Activated CD8-positive, alpha-beta T cell treated with anti-CD3 and anti-CD28 coated beads for 36 hours (primary cell): ENCODE measurements at regions of chr6 and their contacts with region 1.

Region 1: GRCh38 chr6:26270903-26271667 is 93.9 kb upstream of the BTN3A2 start:
- DNase-seq: peak; percentile 87
- ATAC-seq: peak; percentile 43
- H3K4me3 Mint-ChIP-seq: no peak overlapping the region
- H3K27ac Mint-ChIP-seq: no peak overlapping the region
- H3K4me1 Mint-ChIP-seq: peaks cover 18% of the 10 kb centered on the region
- H3K27me3 Mint-ChIP-seq: no peaks in the 10 kb centered on the region
- CTCF ChIP-seq: no peak

Region 2: DNA sequence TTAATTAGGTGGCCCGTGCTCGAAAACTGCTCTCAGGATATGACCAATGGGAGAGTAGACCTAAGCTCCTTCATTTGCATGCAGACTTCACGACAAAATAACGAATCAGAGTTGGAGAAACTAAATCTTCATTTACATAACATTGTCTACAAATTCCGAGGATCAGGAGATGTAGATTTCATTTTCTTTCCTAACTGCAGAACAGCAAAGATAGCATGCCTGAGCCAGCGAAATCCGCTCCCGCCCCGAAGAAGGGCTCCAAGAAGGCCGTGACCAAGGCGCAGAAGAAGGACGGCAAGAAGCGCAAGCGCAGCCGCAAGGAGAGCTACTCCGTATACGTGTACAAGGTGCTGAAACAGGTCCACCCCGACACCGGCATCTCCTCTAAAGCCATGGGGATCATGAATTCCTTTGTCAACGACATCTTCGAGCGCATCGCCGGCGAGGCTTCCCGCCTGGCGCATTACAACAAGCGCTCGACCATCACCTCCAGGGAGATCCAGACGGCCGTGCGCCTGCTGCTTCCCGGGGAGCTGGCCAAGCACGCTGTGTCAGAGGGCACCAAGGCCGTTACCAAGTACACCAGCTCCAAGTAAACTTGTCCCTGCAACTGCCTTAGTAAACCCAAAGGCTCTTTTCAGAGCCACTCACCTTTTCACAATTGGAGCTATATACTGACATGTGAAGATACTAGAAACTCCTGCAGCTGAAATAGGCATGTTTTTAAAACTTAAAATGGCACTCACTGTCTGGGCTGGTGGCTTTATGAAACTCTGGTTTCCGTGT is 87.3 kb before region 1 on chr6:
- CTCF ChIA-PET with region 1: interaction called, 3 read pairs
- POLR2A ChIA-PET with region 1: interaction called, 43 read pairs
- intact Hi-C with region 1: no loop called
- DNase-seq: peak; percentile 72
- ATAC-seq: peak; percentile 82
- H3K4me3 Mint-ChIP-seq: peak overlapping the region; percentile 76
- H3K27ac Mint-ChIP-seq: peak overlapping the region; percentile 84
- H3K4me1 Mint-ChIP-seq: peaks cover 38% of the 10 kb centered on the region
- H3K27me3 Mint-ChIP-seq: no peaks in the 10 kb centered on the region
- CTCF ChIP-seq: no peak

Region 3: DNA sequence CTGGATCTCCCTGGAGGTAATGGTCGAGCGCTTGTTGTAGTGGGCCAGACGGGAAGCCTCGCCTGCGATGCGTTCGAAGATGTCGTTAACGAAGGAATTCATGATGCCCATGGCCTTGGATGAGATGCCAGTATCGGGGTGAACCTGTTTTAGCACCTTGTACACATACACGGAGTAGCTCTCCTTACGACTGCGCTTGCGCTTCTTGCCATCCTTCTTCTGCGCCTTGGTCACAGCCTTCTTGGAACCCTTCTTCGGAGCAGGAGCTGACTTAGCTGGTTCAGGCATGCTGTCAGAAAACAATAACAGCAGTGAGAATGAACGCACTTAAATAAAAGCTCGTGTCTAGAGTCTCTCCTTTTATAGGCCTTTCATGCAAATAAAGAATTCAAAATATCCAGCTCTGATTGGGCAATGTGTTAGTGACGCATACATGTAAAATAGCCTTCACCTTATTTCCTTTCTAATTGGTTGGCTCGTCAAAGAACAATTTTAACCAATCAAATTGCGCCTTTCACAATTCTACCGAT is 54.7 kb before region 1 on chr6:
- CTCF ChIA-PET with region 1: no interaction called
- POLR2A ChIA-PET with region 1: interaction called, 89 read pairs
- intact Hi-C with region 1: loop called (anchors 5 kb)
- DNase-seq: peak; percentile 87
- ATAC-seq: peak; percentile 80
- H3K4me3 Mint-ChIP-seq: no peak overlapping the region
- H3K27ac Mint-ChIP-seq: no peak overlapping the region
- H3K4me1 Mint-ChIP-seq: peaks cover 11% of the 10 kb centered on the region
- H3K27me3 Mint-ChIP-seq: no peaks in the 10 kb centered on the region
- CTCF ChIP-seq: no peak

Region 4: DNA sequence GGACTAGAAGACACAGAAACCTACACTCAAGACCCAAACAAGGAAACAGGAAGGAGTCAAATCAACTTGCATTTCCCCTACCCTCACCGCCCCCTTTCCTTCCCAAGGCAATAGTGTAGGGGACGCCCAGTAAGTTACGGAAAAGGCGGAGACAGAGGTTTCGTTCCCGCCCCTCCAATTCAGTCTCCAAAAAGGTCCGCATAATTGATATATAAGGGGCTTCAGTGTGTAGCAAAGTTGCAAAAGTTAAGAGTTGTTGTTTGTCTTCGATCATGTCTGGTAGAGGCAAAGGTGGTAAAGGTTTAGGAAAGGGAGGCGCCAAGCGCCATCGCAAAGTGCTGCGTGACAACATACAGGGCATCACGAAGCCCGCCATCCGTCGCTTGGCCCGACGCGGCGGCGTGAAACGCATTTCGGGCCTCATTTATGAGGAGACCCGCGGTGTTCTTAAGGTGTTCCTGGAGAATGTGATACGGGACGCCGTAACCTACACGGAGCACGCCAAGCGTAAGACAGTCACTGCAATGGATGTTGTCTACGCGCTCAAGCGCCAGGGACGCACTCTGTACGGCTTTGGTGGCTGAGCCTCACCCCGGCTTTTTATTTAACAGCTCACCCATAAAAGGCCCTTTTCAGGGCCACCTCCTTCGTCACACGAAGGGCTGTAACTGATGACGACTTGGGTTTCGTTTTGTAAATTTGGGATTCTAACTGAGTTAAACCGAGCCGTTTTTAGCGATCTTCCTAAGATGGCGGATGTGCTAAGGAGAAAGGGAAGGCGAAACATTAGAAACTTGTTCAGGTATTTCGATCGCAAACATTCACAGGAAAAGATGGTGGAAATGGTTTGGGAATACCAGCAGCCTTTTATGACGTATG is 30.7 kb before region 1 on chr6:
- CTCF ChIA-PET with region 1: interaction called, 3 read pairs
- POLR2A ChIA-PET with region 1: interaction called, 203 read pairs
- intact Hi-C with region 1: no loop called
- DNase-seq: peak; percentile 88
- ATAC-seq: peak; percentile 82
- H3K4me3 Mint-ChIP-seq: peak overlapping the region; percentile 77
- H3K27ac Mint-ChIP-seq: peak overlapping the region; percentile 92
- H3K4me1 Mint-ChIP-seq: peaks cover 32% of the 10 kb centered on the region
- H3K27me3 Mint-ChIP-seq: no peaks in the 10 kb centered on the region
- CTCF ChIP-seq: no peak

Region 5: DNA sequence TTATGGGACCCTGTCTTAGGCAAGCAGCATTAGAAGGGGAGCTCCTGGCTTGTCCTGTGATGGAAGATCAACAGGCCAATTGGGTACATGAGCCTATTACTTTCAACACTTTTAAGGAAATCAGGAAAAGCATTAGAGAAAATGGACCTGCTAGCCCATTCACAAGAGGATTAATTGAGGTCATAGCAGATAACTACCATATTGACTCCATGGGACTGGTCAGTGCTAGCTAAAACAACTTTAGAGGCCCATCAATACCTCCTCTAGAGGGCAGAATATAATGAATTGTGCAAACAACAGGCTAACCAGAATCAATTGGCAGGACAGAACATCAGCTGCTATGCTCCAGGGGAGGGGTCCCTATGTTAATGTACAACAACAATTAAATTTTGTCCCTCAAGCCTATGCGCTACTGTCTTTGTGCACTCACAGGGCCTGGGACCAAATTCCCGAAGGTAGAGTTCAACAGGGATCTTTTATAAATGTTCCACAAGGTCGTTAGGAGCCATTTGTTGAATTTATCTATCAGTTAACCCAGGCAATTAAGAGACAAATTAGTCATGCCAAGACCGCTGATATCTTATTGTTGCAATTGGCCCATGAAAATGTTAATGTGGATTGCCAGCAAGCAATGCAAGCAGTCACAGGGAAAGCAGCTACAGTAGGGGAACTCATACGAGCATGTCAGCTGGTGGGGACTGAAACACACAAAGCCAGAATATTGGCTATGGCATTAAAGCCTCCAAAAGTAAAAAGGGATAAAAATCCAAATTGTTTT is 12.7 kb before region 1 on chr6:
- CTCF ChIA-PET with region 1: interaction called, 27 read pairs
- POLR2A ChIA-PET with region 1: interaction called, 119 read pairs
- intact Hi-C with region 1: no loop called
- DNase-seq: no peak
- ATAC-seq: no peak
- H3K4me3 Mint-ChIP-seq: no peak overlapping the region
- H3K27ac Mint-ChIP-seq: no peak overlapping the region
- H3K4me1 Mint-ChIP-seq: peaks cover 5% of the 10 kb centered on the region
- H3K27me3 Mint-ChIP-seq: no peaks in the 10 kb centered on the region
- CTCF ChIP-seq: peak; percentile 18

Region 6: GRCh38 chr6:26312501-26313390 is 41.7 kb after region 1 on chr6:
- CTCF ChIA-PET with region 1: interaction called, 8 read pairs
- POLR2A ChIA-PET with region 1: interaction called, 16 read pairs
- intact Hi-C with region 1: loop called (anchors 5 kb)
- DNase-seq: peak; percentile 92
- ATAC-seq: peak; percentile 74
- H3K4me3 Mint-ChIP-seq: peak overlapping the region; percentile 84
- H3K27ac Mint-ChIP-seq: peak overlapping the region; percentile 93
- H3K4me1 Mint-ChIP-seq: peaks cover 33% of the 10 kb centered on the region
- H3K27me3 Mint-ChIP-seq: no peaks in the 10 kb centered on the region
- CTCF ChIP-seq: no peak